Uterus (tissue), 4 donors: ENCODE measurements at regions of chr16 and their contacts with region 1.

Region 1: GRCh38 chr16:86072328-86073102 is 173.6 kb downstream of the IRF8 start:
- DNase-seq: peak; percentile 42 to 65
- H3K4me3 ChIP-seq: no peak overlapping the region
- H3K27ac ChIP-seq: no peak overlapping the region
- H3K4me1 ChIP-seq: no peaks in the 10 kb centered on the region
- H3K27me3 ChIP-seq: no peaks in the 10 kb centered on the region
- CTCF ChIP-seq: peak; percentile 56 to 81 (median 58)
- POLR2A ChIP-seq: no peak

Region 2: DNA sequence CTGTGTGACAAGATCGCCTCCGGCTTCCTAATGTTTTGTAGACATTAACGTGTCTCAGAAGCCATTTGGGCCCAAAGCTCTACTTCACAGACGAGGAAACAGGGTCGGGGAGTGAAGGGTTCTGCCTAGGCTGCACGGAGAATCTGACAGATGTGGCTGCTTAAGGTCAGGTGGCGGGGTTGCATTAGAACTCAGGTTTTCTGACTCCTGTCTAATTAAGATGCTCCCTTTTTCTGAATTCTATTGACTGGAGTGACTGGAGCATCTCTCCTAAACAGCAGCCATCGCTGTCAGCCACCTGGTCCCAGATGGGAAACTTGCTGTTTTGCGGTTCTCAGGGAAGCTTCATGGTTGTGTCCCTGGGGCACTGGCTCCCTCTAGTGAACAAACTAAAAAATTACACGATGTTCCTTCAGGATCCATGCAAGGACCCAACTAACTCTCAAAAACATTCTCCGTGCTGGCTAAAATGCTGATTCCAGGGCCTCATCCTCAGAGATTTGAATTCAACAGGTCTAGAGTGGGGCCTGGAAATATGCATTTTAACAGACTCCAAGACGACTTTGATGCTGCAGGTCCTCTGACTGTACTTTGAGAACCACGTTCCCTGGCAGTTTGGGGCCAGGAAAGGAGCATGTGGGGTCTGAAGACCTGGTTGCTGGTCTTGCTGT is 56.2 kb before region 1 on chr16:
- intact Hi-C with region 1: no loop called
- DNase-seq: no peak
- H3K4me3 ChIP-seq: no peak overlapping the region
- H3K27ac ChIP-seq: no peak overlapping the region
- H3K4me1 ChIP-seq: no peaks in the 10 kb centered on the region
- H3K27me3 ChIP-seq: no peaks in the 10 kb centered on the region
- CTCF ChIP-seq: peak; percentile 52 to 72 (median 66)
- POLR2A ChIP-seq: no peak

Region 3: GRCh38 chr16:86167061-86167460 is 94.5 kb after region 1 on chr16:
- intact Hi-C with region 1: no loop called
- DNase-seq: no peak
- H3K4me3 ChIP-seq: no peak overlapping the region
- H3K27ac ChIP-seq: no peak overlapping the region
- H3K4me1 ChIP-seq: no peaks in the 10 kb centered on the region
- H3K27me3 ChIP-seq: peaks cover 0 to under 1% of the 10 kb centered on the region in 2 donors
- CTCF ChIP-seq: no peak
- POLR2A ChIP-seq: no peak

Region 4: GRCh38 chr16:86519649-86520316 is 447.3 kb after region 1 on chr16:
- intact Hi-C with region 1: loop called (anchors 5 kb)
- DNase-seq: peak; percentile 48 to 54
- H3K4me3 ChIP-seq: no peak overlapping the region
- H3K27ac ChIP-seq: no peak overlapping the region
- H3K4me1 ChIP-seq: no peaks in the 10 kb centered on the region
- H3K27me3 ChIP-seq: peaks cover 0 to 23% of the 10 kb centered on the region in 2 donors
- CTCF ChIP-seq: peak; percentile 70 to 89 (median 84)
- POLR2A ChIP-seq: no peak